Activated CD4-positive, alpha-beta memory T cell treated with anti-CD3 and anti-CD28 coated beads, Interleukin-2, amount 10 ng/mL, durations not matched to agents 7 days and 5 days (primary cell): ENCODE measurements at regions of chr2 and their contacts with region 1.

Region 1: DNA sequence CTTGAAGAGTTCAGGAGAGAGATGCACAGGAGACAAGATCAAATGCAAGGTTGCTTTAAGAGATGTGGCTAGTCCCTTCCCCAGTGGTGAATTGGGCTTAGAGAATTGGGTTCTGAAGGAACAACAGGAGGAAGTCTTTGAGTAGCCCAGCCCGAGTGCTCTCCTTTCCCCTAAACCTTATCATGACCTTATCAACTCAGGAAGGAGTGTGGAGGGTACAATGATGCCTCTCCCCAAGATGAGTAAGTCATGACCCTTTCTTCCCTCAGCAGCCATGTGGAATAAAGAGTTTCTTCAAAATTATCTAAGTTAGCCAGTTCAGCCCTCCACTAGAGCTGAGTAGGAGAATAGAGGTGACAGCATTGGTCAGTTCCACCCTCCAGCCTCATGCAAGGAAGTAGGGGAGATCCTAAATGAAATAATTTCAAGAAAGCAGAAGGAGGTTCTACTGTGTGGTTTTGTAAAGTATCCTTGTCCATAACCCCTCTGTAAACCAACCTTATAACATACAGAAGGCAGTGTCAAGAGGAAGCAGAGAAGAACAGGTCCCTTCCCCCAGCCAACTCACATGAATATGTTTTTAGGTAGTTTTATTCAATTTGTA is 88.4 kb downstream of the ARHGAP15 start:
- DNase-seq: no peak
- H3K4me3 Mint-ChIP-seq: no peak overlapping the region
- H3K27ac Mint-ChIP-seq: peak overlapping the region; percentile 43
- H3K4me1 Mint-ChIP-seq: peaks cover 31% of the 10 kb centered on the region
- H3K27me3 Mint-ChIP-seq: no peaks in the 10 kb centered on the region

Region 2: DNA sequence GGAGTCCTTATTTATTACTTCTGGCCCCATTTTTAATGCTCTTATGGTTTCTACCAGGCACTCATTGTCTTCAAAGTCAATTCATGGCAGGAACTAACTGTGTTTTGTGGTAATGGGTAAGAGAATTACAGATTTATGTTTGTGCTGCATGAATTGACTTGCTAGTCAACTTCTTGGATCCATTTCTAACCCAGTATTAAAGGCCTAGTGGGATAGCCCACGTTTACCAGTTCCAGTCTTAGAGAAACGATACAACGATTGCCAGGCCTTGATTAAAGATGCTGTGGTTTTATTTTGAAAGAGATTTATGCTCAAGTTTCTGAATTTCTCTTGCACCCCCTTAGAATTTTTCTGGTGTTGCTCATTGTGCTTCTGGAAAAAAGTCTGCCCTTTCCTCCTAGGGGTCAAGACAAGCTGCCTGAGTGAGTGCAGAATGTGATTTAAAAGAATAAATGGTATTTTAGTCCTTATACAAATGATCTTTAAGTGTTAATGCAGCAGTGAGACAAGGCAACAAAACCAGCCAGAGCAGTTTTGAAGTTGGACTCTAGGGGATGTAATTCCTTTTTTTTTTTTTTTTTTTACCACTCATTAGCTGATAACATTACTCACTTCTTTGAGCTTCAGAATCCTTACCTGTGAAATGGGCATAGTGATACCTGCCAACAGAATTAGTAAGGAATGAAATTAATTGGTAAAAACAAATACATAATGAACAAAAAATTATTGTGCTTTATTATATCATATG is 13.1 kb after region 1 on chr2:
- CTCF ChIA-PET with region 1: interaction called, 12 read pairs
- POLR2A ChIA-PET with region 1: no interaction called
- DNase-seq: no peak
- H3K4me3 Mint-ChIP-seq: no peak overlapping the region
- H3K27ac Mint-ChIP-seq: no peak overlapping the region
- H3K4me1 Mint-ChIP-seq: peaks cover 15% of the 10 kb centered on the region
- H3K27me3 Mint-ChIP-seq: no peaks in the 10 kb centered on the region

Region 3: DNA sequence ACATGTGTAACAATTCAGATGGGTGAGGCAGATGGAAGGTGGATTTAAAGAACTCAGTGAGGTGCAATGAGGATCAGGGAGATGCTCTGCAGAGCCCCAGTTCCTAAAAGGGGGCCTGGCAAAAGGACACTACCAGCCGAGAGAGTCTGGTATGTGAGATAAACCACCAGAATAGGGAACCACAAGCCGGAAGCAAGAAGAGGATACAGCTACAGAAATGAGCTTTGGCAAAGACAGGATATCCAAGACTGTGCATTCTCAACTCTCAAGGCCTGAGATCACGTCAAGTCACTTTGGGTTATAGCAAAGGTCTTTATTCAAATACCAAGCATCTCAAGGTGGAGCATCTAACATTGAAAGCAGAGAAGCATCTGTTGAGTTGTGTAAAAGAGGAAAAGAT is 205.1 kb after region 1 on chr2:
- CTCF ChIA-PET with region 1: no interaction called
- POLR2A ChIA-PET with region 1: no interaction called
- DNase-seq: peak; percentile 24
- H3K4me3 Mint-ChIP-seq: no peak overlapping the region
- H3K27ac Mint-ChIP-seq: no peak overlapping the region
- H3K4me1 Mint-ChIP-seq: peaks cover 38% of the 10 kb centered on the region
- H3K27me3 Mint-ChIP-seq: no peaks in the 10 kb centered on the region